ENCODE measurements at regions of chr20 and their contacts with region 1.

Region 1: DNA sequence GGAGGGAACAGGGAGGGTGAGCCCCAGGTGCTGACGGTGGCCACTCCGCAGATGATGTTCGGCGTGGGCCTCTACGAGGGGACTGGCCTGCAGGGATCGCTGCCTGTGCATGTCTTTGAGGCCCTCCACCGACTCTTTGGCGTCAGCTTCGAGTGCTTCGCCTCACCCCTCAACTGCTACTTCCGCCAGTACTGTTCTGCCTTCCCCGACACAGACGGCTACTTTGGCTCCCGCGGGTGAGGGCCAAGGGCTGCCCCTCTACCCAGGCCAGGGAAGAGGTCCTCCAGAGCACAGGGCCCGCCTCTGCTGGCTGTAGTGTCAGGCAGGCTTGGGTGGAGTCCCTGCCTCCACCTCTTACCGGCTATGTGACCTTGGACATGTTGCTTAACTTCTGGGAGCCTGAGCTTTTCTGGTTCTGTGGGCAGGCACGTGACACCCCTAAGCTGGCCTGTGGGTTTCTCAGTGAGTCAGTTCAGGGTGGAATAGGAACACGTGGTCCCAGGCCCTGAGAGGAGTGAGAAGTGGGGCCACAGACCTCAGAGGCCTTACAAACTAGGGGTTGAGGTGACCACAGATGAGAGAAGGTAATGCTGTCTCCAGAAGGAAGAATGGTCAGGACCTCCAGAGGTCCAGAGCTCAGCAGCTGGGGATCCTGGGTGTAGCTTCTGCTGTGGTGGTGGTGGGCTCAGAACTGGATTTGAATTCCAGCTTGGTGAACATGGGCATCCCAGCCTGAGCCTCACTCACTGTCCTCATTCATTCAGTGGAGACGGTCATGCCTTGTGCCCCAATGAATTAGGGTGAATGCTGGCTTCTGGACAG is 11.9 kb downstream of the PCIF1 start:
- DNase-seq: peak; percentile 97
- ATAC-seq: peak; percentile 83
- H3K4me3 ChIP-seq: no peak overlapping the region
- H3K27ac ChIP-seq: peak overlapping the region; percentile 65
- H3K4me1 ChIP-seq: peaks cover 30% of the 10 kb centered on the region
- H3K27me3 ChIP-seq: no peaks in the 10 kb centered on the region
- CTCF ChIP-seq: peak; percentile 46
- EP300 ChIP-seq: peak; percentile 64 to 80; a peak in 3 of 4 replicates
- POLR2A ChIP-seq: peak; percentile 2 to 37; a peak in 2 of 4 replicates
- RAD21 ChIP-seq: peak; percentile 12; the same call in 1 of the 2 replicates

Region 2: GRCh38 chr20:44422083-44422482 is 1524.3 kb before region 1 on chr20:
- CTCF ChIA-PET with region 1: no interaction called
- POLR2A ChIA-PET with region 1: no interaction called
- in situ Hi-C with region 1: no loop called
- intact Hi-C with region 1: no loop called
- DNase-seq: no peak
- ATAC-seq: no peak
- H3K4me3 ChIP-seq: no peak overlapping the region
- H3K27ac ChIP-seq: peak overlapping the region; percentile 12
- H3K4me1 ChIP-seq: peaks cover 63% of the 10 kb centered on the region
- H3K27me3 ChIP-seq: no peaks in the 10 kb centered on the region
- CTCF ChIP-seq: no peak
- EP300 ChIP-seq: no peak
- POLR2A ChIP-seq: peak in 1 of 2 experiments; percentile 35; a peak in 1 of 4 replicates
- RAD21 ChIP-seq: no peak

Region 3: GRCh38 chr20:45823949-45824835 is 122.2 kb before region 1 on chr20:
- CTCF ChIA-PET with region 1: no interaction called
- POLR2A ChIA-PET with region 1: interaction called, 3 read pairs
- in situ Hi-C with region 1: loop called (anchors 5 kb)
- intact Hi-C with region 1: no loop called
- DNase-seq: peak; percentile 51
- ATAC-seq: peak; percentile 71
- H3K4me3 ChIP-seq: peak overlapping the region in 1 of 3 experiments; percentile 28; a peak in 1 of 6 replicates
- H3K27ac ChIP-seq: no peak overlapping the region
- H3K4me1 ChIP-seq: peaks cover 61% of the 10 kb centered on the region
- H3K27me3 ChIP-seq: no peaks in the 10 kb centered on the region
- CTCF ChIP-seq: peak; percentile 98
- EP300 ChIP-seq: no peak
- POLR2A ChIP-seq: no peak
- RAD21 ChIP-seq: peak; percentile 94